A549 (cell line): ENCODE measurements at regions of chr16 and their contacts with region 1.

Region 1: GRCh38 chr16:49407873-49408550 is 34.4 kb downstream of the C16orf78 start:
- DNase-seq: peak; percentile 71 to 80
- ATAC-seq: peak; percentile 98 to 100
- H3K4me3 ChIP-seq: no peak overlapping the region
- H3K27ac ChIP-seq: no peak overlapping the region
- H3K4me1 ChIP-seq: no peaks in the 10 kb centered on the region
- CTCF ChIP-seq: peak; percentile 81
- EP300 ChIP-seq: no peak
- POLR2A ChIP-seq: no peak
- RAD21 ChIP-seq: peak; percentile 88 to 90

Region 2: GRCh38 chr16:49419006-49419405 is 11.0 kb after region 1 on chr16:
- CTCF ChIA-PET with region 1: interaction called, 34 read pairs
- POLR2A ChIA-PET with region 1: no interaction called
- DNase-seq: no peak
- ATAC-seq: no peak
- H3K4me3 ChIP-seq: no peak overlapping the region
- H3K27ac ChIP-seq: no peak overlapping the region
- H3K4me1 ChIP-seq: no peaks in the 10 kb centered on the region
- CTCF ChIP-seq: no peak
- EP300 ChIP-seq: no peak
- POLR2A ChIP-seq: no peak
- RAD21 ChIP-seq: no peak

Region 3: GRCh38 chr16:49531931-49532840 is 124.2 kb after region 1 on chr16:
- CTCF ChIA-PET with region 1: no interaction called
- POLR2A ChIA-PET with region 1: no interaction called
- DNase-seq: no peak
- ATAC-seq: no peak
- H3K4me3 ChIP-seq: no peak overlapping the region
- H3K27ac ChIP-seq: no peak overlapping the region
- H3K4me1 ChIP-seq: no peaks in the 10 kb centered on the region
- CTCF ChIP-seq: no peak
- EP300 ChIP-seq: no peak
- POLR2A ChIP-seq: no peak
- RAD21 ChIP-seq: no peak

Region 4: GRCh38 chr16:49592546-49593423 is 184.8 kb after region 1 on chr16:
- CTCF ChIA-PET with region 1: interaction called, 20 read pairs
- POLR2A ChIA-PET with region 1: no interaction called
- DNase-seq: peak; percentile 35 to 69
- ATAC-seq: peak; percentile 71 to 92; a peak in 5 of 6 replicates
- H3K4me3 ChIP-seq: no peak overlapping the region
- H3K27ac ChIP-seq: no peak overlapping the region
- H3K4me1 ChIP-seq: no peaks in the 10 kb centered on the region
- CTCF ChIP-seq: peak; percentile 61
- EP300 ChIP-seq: no peak
- POLR2A ChIP-seq: no peak
- RAD21 ChIP-seq: peak; percentile 53 to 54

Region 5: GRCh38 chr16:49921791-49922456 is 513.9 kb after region 1 on chr16:
- CTCF ChIA-PET with region 1: interaction called, 38 read pairs
- POLR2A ChIA-PET with region 1: no interaction called
- DNase-seq: peak; percentile 66
- ATAC-seq: peak; percentile 83 to 90
- H3K4me3 ChIP-seq: no peak overlapping the region
- H3K27ac ChIP-seq: no peak overlapping the region
- H3K4me1 ChIP-seq: no peaks in the 10 kb centered on the region
- CTCF ChIP-seq: peak; percentile 60
- EP300 ChIP-seq: no peak
- POLR2A ChIP-seq: no peak
- RAD21 ChIP-seq: peak; percentile 72 to 85